Dorsolateral prefrontal cortex (tissue), 120 donors: ENCODE measurements at regions of chr22 and their contacts with region 1.

Region 1: GRCh38 chr22:50525390-50526068 is at the start of gene SCO2:
- DNase-seq: peak; percentile 88 to 96 (median 93)
- H3K4me3 ChIP-seq: peak within 1 kb of the TSS; percentile 55 to 98 (median 88)
- H3K27ac ChIP-seq: peak within 1 kb of the TSS; percentile 59 to 98 (median 91)
- H3K27me3 ChIP-seq: peaks cover 0 to 16% (median 10%) of the 10 kb centered on the region in 45 donors
- CTCF ChIP-seq: peak in 47 of 56 donors; percentile 16 to 63 (median 42)
- total RNA-seq, gene SCO2: 0.59 to 11.9 (median 2.8) TPM in 53 of 120 experiments, not detected in the others

Region 2: GRCh38 chr22:50244420-50245213 is 280.9 kb before region 1 on chr22 and contains the start of gene TUBGCP6:
- intact Hi-C with region 1: loop called in 1 of 2 experiments (anchors 10 kb)
- DNase-seq: peak; percentile 91 to 98 (median 96)
- H3K4me3 ChIP-seq: peak within 1 kb of the TSS; percentile 60 to 100 (median 93)
- H3K27ac ChIP-seq: peak within 1 kb of the TSS in 58 of 59 donors; percentile 29 to 96 (median 85)
- H3K27me3 ChIP-seq: no peaks in the 10 kb centered on the region
- CTCF ChIP-seq: peak in 50 of 56 donors; percentile 16 to 71 (median 40)
- total RNA-seq, gene TUBGCP6: 40.5 to 94.4 (median 60.7) TPM

Region 3: GRCh38 chr22:50507991-50508884 is 17.3 kb before region 1 on chr22 and contains the start of gene NCAPH2:
- intact Hi-C with region 1: loop called (anchors 1 kb)
- DNase-seq: peak; percentile 92 to 99 (median 96)
- H3K4me3 ChIP-seq: peak within 1 kb of the TSS; percentile 72 to 100 (median 92)
- H3K27ac ChIP-seq: peak within 1 kb of the TSS; percentile 34 to 95 (median 85)
- H3K27me3 ChIP-seq: no peaks in the 10 kb centered on the region
- CTCF ChIP-seq: peak in 12 of 56 donors; percentile 2 to 32 (median 16)
- total RNA-seq, gene NCAPH2: 47.2 to 83.2 (median 61.5) TPM

Region 4: GRCh38 chr22:50562523-50563412 is 37.2 kb after region 1 on chr22 and contains the start of gene SYCE3:
- intact Hi-C with region 1: loop called (anchors 5 kb)
- DNase-seq: peak; percentile 93 to 100 (median 97)
- H3K4me3 ChIP-seq: peak within 1 kb of the TSS; percentile 53 to 94 (median 77)
- H3K27ac ChIP-seq: peak within 1 kb of the TSS in 54 of 59 donors; percentile 15 to 90 (median 72)
- H3K27me3 ChIP-seq: no peaks in the 10 kb centered on the region
- CTCF ChIP-seq: peak; percentile 81 to 98 (median 94)
- total RNA-seq, gene SYCE3: 1.4 to 6.0 (median 2.0) TPM in 14 of 120 experiments, not detected in the others

Region 5: DNA sequence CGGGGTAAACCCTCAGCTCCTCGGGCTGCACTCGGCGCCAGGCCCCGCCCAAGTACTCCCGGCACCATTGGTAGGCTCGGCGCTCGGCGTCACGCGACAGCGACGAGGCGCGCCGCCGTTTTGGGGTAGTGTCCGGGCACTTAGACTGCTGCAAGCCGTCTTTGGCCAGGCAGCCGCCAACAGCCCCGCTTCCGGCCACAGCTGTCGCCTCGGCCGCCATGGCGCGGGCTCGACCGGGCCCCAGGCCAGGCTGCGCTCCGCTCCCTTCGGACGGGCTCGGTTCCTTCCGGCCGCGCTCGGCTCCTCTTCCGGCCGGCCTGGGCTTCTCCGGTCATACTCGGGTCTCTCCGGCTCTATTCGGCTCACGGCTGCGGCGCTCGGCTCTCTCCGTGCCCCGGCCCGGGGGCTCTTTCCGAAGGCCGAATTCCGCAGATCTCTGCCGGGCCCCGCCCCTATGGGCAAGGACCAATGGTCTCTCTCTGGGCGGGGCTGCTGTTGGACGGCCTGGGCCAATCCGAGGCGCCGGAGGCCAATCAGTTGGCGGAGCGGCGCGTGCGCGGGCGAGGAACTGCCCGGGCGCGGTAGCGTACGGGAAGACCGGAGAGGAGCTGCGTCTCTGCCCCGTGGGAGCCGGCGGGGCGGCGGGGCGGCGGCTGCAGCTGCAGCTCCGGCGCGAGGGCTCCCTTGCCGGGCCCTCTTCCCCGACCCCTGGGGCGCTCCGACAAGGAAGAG is 57.2 kb after region 1 on chr22 and contains the start of gene CHKB:
- intact Hi-C with region 1: loop called in 1 of 2 experiments (anchors 2 kb)
- DNase-seq: peak; percentile 97 to 100 (median 98)
- H3K4me3 ChIP-seq: peak within 1 kb of the TSS; percentile 55 to 99 (median 86)
- H3K27ac ChIP-seq: peak within 1 kb of the TSS; percentile 84 to 100 (median 98)
- H3K27me3 ChIP-seq: no peaks in the 10 kb centered on the region
- CTCF ChIP-seq: peak in 26 of 56 donors; percentile 6 to 61 (median 24)
- total RNA-seq, gene CHKB: 36.7 to 115 (median 63.9) TPM

Region 6: DNA sequence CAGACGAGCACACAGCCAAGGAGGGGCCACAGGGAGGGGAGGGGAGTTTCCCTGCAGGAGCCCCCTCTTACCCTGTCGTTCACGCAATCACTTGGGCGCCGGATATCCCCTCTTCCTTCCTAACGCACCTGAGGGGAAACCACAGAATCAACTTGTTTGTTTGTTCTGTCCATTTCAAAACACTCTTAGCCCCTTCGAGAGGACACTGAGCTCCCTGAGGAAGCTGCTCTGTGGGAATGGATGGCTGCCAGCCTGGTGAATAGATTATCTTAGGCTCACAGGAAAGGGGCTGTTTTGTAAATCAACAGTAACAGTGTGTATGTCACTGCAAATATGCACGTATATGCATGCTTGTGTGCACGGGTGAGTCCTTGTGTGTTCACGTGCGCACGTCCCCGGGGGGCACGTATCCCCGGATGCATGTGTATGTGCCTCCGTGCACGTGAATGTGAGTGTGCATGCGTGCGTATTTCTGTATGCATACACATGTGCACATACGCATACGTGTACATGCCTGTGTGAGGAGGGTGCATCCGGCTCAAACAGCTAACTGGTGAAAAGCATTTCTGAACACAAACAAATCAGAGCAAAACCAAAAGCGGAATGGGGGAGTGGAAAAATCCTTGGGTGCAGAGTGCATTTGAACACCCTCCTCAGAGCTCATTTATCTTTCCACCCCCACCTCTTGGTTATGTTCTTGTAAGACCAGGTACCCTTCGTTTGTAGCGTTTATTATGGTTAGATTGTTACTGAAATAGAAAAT is 95.2 kb after region 1 on chr22:
- intact Hi-C with region 1: loop called in 1 of 2 experiments (anchors 5 kb)
- DNase-seq: peak in 5 of 10 donors; percentile 43 to 79 (median 69)
- H3K4me3 ChIP-seq: peak overlapping the region; percentile 6 to 67 (median 51)
- H3K27ac ChIP-seq: peak overlapping the region in 57 of 59 donors; percentile 13 to 93 (median 70)
- H3K27me3 ChIP-seq: no peaks in the 10 kb centered on the region
- CTCF ChIP-seq: peak in 18 of 56 donors; percentile 2 to 86 (median 71)